Activated naive CD4-positive, alpha-beta T cell treated with anti-CD3 and anti-CD28 coated beads for 36 hours (primary cell): ENCODE measurements at regions of chr10 and their contacts with region 1.

Region 1: DNA sequence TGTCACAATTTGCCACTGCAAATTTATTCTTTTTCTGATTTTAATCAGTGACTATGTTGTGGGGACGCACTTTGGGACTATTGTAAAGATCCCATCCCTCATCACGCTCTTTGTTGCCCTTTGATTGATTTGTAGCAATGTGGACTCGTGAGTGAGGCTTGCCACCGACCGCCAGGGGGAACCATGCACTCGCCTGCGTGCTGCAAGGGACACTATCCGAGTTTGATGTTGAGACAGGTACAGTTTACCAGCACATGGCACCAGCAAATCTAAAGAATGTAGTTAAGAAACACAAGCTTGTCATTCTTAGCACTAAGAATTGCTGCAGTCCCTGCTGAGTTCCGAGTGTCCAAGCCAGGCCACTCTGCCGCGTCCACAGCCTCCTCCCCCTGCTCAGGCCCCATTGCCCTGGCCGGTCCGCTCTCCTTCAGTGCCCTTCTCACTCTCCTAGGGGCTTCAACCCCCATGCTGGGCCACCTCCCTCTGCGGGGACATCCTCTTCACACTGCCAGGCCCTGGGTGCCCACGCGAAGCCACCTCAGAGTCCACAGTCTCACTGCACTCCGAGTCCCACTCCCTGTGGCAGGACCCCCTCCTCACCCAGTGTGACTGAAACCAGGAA is 2.0 kb upstream of the SFTPA2 start:
- DNase-seq: peak; percentile 81
- H3K4me3 Mint-ChIP-seq: no peak overlapping the region
- H3K27ac Mint-ChIP-seq: no peak overlapping the region
- H3K4me1 Mint-ChIP-seq: peaks cover 6% of the 10 kb centered on the region
- H3K27me3 Mint-ChIP-seq: peaks cover 12% of the 10 kb centered on the region

Region 2: GRCh38 chr10:79367426-79368189 is 194.6 kb before region 1 on chr10:
- CTCF ChIA-PET with region 1: no interaction called
- intact Hi-C with region 1: no loop called
- DNase-seq: no peak
- H3K4me3 Mint-ChIP-seq: no peak overlapping the region
- H3K27ac Mint-ChIP-seq: no peak overlapping the region
- H3K4me1 Mint-ChIP-seq: no peaks in the 10 kb centered on the region
- H3K27me3 Mint-ChIP-seq: no peaks in the 10 kb centered on the region

Region 3: GRCh38 chr10:79472951-79473350 is 89.3 kb before region 1 on chr10:
- CTCF ChIA-PET with region 1: no interaction called
- intact Hi-C with region 1: no loop called
- DNase-seq: no peak
- H3K4me3 Mint-ChIP-seq: no peak overlapping the region
- H3K27ac Mint-ChIP-seq: no peak overlapping the region
- H3K4me1 Mint-ChIP-seq: no peaks in the 10 kb centered on the region
- H3K27me3 Mint-ChIP-seq: peaks cover 2% of the 10 kb centered on the region

Region 4: GRCh38 chr10:79502561-79503309 is 59.5 kb before region 1 on chr10:
- CTCF ChIA-PET with region 1: no interaction called
- intact Hi-C with region 1: no loop called
- DNase-seq: peak; percentile 17
- H3K4me3 Mint-ChIP-seq: no peak overlapping the region
- H3K27ac Mint-ChIP-seq: no peak overlapping the region
- H3K4me1 Mint-ChIP-seq: no peaks in the 10 kb centered on the region
- H3K27me3 Mint-ChIP-seq: peaks cover 7% of the 10 kb centered on the region

Region 5: DNA sequence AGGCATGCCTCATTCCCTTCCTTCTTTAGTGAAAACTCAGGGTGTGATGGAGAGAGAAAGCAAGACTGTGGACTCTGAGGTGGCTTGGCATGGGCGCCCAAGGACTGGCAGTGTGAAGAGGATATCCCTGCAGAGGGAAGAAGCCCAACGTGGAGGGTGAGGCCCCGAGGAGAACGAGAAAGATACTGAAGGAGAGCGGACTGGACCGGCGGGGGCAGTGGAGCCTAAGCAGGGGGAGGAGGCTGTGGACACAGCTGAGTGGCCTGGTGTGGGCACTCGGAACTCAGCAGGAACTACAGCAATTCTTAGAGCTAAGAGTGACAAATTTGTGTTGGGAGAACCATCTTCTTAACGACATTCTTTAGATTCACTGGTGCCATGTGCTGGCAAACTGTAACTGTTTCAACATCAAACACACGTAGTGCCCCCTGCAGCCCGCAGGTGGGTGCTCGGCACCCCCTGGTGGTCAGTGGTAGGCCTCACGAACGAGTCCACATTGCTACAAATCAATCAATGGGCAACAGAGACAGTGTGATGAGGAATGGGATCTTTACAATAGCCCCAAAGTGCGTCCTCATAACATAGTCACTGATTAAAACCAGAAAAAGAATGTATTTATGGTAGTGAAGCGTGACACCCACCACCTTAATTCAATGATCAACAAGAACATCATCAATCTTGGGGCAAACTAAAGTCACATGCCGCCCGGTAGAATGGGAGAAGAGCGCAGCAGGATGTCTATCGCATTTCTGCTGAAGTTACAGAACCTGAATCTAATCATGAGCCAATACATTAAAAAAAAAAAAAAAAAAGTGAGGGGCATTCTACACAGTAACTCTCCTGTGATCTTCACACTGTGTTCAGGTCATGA is 46.5 kb after region 1 on chr10:
- CTCF ChIA-PET with region 1: interaction called, 6 read pairs
- intact Hi-C with region 1: loop called (anchors 1 kb)
- DNase-seq: peak; percentile 60
- H3K4me3 Mint-ChIP-seq: no peak overlapping the region
- H3K27ac Mint-ChIP-seq: no peak overlapping the region
- H3K4me1 Mint-ChIP-seq: no peaks in the 10 kb centered on the region
- H3K27me3 Mint-ChIP-seq: peaks cover 3% of the 10 kb centered on the region

Region 6: DNA sequence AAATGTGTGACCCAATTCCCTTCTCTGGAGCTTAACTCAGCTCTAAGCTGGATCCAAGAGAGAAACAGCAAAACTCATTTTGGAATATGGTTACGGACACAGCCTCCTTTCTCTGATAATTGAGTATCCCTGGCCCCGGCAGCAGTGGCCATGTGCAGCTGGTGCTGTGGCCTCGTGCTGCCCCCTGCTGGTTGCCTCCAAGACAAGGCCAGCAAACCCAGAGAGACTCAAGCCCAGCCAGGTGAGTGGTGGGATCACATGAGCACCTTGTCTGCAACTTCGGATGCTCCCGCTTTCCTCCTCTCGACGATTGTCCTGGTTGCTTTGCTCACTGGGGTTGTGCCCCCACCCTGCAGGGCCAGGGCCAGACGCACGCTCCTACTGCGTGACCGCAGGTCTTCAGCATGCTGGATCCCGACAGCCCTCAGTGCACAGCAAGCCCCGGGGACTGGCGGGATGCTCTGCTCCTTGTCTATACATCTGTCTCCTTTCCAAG is 367.2 kb after region 1 on chr10:
- CTCF ChIA-PET with region 1: interaction called, 3 read pairs
- intact Hi-C with region 1: loop called (anchors 1 kb)
- DNase-seq: peak; percentile 88
- H3K4me3 Mint-ChIP-seq: no peak overlapping the region
- H3K27ac Mint-ChIP-seq: no peak overlapping the region
- H3K4me1 Mint-ChIP-seq: peaks cover 3% of the 10 kb centered on the region
- H3K27me3 Mint-ChIP-seq: peaks cover 21% of the 10 kb centered on the region